T-cell (primary cell): ENCODE measurements at regions of chr11 and their contacts with region 1.

Region 1: DNA sequence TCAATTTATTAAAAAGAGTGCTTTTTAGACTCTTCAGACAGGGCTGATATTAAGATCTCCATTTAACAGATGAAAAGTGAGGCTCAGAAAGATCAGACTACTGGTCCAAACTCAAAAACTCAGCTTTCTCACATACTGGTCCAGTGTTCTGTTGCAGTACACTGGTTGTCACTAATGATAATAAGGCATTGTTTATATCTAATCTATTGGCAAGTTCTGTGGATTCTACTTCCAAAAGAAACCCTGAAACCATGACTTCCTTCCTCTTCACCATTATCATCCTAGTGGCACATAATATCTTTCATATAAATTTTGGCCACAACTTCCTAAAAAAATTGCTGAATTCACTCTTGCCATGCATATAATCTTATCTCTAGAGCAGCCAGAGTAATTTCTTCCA is 36.9 kb downstream of the F2 start:
- DNase-seq: no peak
- ATAC-seq: no peak
- H3K4me3 ChIP-seq: no peak overlapping the region
- H3K4me3 Mint-ChIP-seq: no peak overlapping the region
- H3K27ac ChIP-seq: no peak overlapping the region
- H3K27ac Mint-ChIP-seq: no peak overlapping the region
- H3K4me1 ChIP-seq: no peaks in the 10 kb centered on the region
- H3K4me1 Mint-ChIP-seq: no peaks in the 10 kb centered on the region
- H3K27me3 ChIP-seq: no peaks in the 10 kb centered on the region
- H3K27me3 Mint-ChIP-seq: no peaks in the 10 kb centered on the region

Region 2: DNA sequence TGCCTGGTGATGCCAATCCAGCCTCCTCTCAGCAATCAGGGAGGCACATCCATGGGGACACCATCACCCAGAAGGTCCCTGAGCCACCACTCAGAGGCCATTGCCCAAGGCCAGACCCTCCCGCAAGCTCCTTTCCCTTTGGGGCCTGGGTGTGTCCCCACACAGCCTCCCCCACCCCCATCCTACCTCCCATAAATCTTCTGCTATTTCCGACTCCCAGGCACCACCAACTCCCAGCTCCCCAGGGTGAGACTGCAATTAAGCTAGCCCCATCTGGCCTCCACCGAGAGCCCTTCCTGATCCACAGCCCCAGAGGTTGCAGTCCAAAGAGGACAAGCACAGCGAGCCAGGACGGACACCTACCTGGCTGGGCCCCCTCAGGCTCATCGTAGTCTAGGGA is 61.9 kb before region 1 on chr11:
- CTCF ChIA-PET with region 1: no interaction called
- POLR2A ChIA-PET with region 1: interaction called in 1 of 2 experiments, 10 read pairs
- DNase-seq: no peak
- ATAC-seq: no peak
- H3K4me3 ChIP-seq: no peak overlapping the region
- H3K4me3 Mint-ChIP-seq: no peak overlapping the region
- H3K27ac ChIP-seq: no peak overlapping the region
- H3K27ac Mint-ChIP-seq: peak overlapping the region in 1 of 2 donors; percentile 28
- H3K4me1 ChIP-seq: peaks cover 12 to 51% of the 10 kb centered on the region in 2 experiments
- H3K4me1 Mint-ChIP-seq: peaks cover 21 to 38% (median 36%) of the 10 kb centered on the region in 3 donors
- H3K27me3 ChIP-seq: no peaks in the 10 kb centered on the region
- H3K27me3 Mint-ChIP-seq: no peaks in the 10 kb centered on the region

Region 3: GRCh38 chr11:46896719-46897406 is 140.9 kb after region 1 on chr11:
- CTCF ChIA-PET with region 1: no interaction called
- POLR2A ChIA-PET with region 1: no interaction called
- DNase-seq: peak in 1 of 35 experiments; percentile 25
- ATAC-seq: peak in 1 of 4 experiments; percentile 23
- H3K4me3 ChIP-seq: no peak overlapping the region
- H3K4me3 Mint-ChIP-seq: no peak overlapping the region
- H3K27ac ChIP-seq: no peak overlapping the region
- H3K27ac Mint-ChIP-seq: no peak overlapping the region
- H3K4me1 ChIP-seq: no peaks in the 10 kb centered on the region
- H3K4me1 Mint-ChIP-seq: no peaks in the 10 kb centered on the region
- H3K27me3 ChIP-seq: peaks cover 0 to 20% of the 10 kb centered on the region in 2 experiments
- H3K27me3 Mint-ChIP-seq: no peaks in the 10 kb centered on the region